ENCODE measurements at regions of chr20 and their contacts with region 1.

Region 1: GRCh38 chr20:21033817-21034216 is 72.3 kb downstream of the LINC00237 start:
- DNase-seq: no peak
- ATAC-seq: no peak
- H3K4me3 ChIP-seq: no peak overlapping the region
- H3K27ac ChIP-seq: no peak overlapping the region
- H3K4me1 ChIP-seq: no peaks in the 10 kb centered on the region
- H3K27me3 ChIP-seq: peaks cover 24% of the 10 kb centered on the region
- CTCF ChIP-seq: no peak

Region 2: DNA sequence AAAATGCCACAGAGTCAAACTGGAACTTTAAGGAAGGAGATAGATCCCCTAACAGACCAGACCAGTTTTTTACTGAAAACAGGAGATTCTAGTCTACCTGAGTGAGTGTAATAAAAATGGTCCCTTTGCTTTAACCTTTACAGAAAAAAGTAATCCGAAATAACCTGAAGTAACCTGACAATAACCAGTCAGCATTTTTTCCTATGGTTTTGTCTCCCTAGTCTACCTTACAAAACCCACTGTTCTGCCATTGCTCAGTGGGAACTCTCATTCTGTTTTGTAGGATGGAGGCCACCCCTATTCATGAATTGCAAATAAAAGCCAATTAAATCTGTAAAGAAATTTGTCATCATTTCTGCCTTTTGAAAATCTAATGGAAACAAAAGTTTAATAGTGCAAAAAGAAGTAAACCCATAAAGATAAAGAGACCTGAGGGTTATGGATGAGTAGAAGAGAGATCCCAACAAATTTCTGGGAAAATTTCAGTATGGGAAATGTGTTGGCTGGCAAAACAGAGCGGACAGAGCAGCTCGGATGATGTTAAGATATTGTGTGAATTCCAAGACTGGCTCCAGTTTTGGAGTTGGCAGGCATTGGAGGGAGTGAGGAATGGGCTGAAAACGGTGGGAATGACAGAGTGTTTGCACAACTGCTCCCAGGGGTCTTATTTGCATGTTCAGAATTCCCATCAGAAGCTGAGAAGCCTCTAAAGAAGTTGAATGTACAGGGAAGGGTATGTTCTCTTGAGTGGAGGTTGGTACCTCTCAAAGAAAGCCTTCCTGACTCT is 216.7 kb before region 1 on chr20:
- CTCF ChIA-PET with region 1: interaction called, 10 read pairs
- POLR2A ChIA-PET with region 1: no interaction called
- intact Hi-C with region 1: no loop called
- DNase-seq: no peak
- ATAC-seq: no peak
- H3K4me3 ChIP-seq: no peak overlapping the region
- H3K27ac ChIP-seq: no peak overlapping the region
- H3K4me1 ChIP-seq: no peaks in the 10 kb centered on the region
- H3K27me3 ChIP-seq: peaks cover 64% of the 10 kb centered on the region
- CTCF ChIP-seq: no peak

Measured in PC-3 (cell line).